B cell (primary cell): ENCODE measurements at regions of chr14 and their contacts with region 1.

Region 1: GRCh38 chr14:24114536-24115450 is at the starts of genes DCAF11 and NRL:
- DNase-seq: peak; percentile 100
- ATAC-seq: peak; percentile 81
- H3K4me3 ChIP-seq: peak within 1 kb of the TSS; percentile 88 to 99 (median 97)
- H3K4me3 Mint-ChIP-seq: peak within 1 kb of the TSS; percentile 93
- H3K27ac ChIP-seq: peak within 1 kb of the TSS; percentile 99 to 100
- H3K27ac Mint-ChIP-seq: peak within 1 kb of the TSS; percentile 100
- H3K4me1 ChIP-seq: peaks cover 17 to 25% of the 10 kb centered on the region in 2 donors
- H3K4me1 Mint-ChIP-seq: peaks cover 26% of the 10 kb centered on the region
- H3K27me3 ChIP-seq: no peaks in the 10 kb centered on the region
- H3K27me3 Mint-ChIP-seq: no peaks in the 10 kb centered on the region
- CTCF ChIP-seq: no peak
- total RNA-seq, gene DCAF11: 84.8 and 96.3 TPM in 2 replicates
- total RNA-seq, gene NRL: 8.1 and 8.8 TPM in 2 replicates

Region 2: GRCh38 chr14:23555882-23556699 is 558.7 kb before region 1 on chr14 and contains the start of gene THTPA:
- CTCF ChIA-PET with region 1: no interaction called
- POLR2A ChIA-PET with region 1: no interaction called
- intact Hi-C with region 1: loop called (anchors 10 kb)
- DNase-seq: peak; percentile 96
- ATAC-seq: peak; percentile 78
- H3K4me3 ChIP-seq: peak within 1 kb of the TSS; percentile 17 to 97 (median 81)
- H3K4me3 Mint-ChIP-seq: peak within 1 kb of the TSS; percentile 98
- H3K27ac ChIP-seq: peak within 1 kb of the TSS; percentile 69 to 84
- H3K27ac Mint-ChIP-seq: peak within 1 kb of the TSS; percentile 99
- H3K4me1 ChIP-seq: peaks cover 19 to 36% of the 10 kb centered on the region in 2 donors
- H3K4me1 Mint-ChIP-seq: peaks cover 45% of the 10 kb centered on the region
- H3K27me3 ChIP-seq: no peaks in the 10 kb centered on the region
- H3K27me3 Mint-ChIP-seq: no peaks in the 10 kb centered on the region
- CTCF ChIP-seq: no peak
- total RNA-seq, gene THTPA: 21.4 and 21.5 TPM in 2 replicates

Region 3: GRCh38 chr14:23694085-23694975 is 420.5 kb before region 1 on chr14:
- CTCF ChIA-PET with region 1: no interaction called
- POLR2A ChIA-PET with region 1: no interaction called
- intact Hi-C with region 1: no loop called
- DNase-seq: no peak
- ATAC-seq: no peak
- H3K4me3 ChIP-seq: no peak overlapping the region
- H3K4me3 Mint-ChIP-seq: no peak overlapping the region
- H3K27ac ChIP-seq: no peak overlapping the region
- H3K27ac Mint-ChIP-seq: no peak overlapping the region
- H3K4me1 ChIP-seq: peaks cover 5 to 9% of the 10 kb centered on the region in 2 donors
- H3K4me1 Mint-ChIP-seq: no peaks in the 10 kb centered on the region
- H3K27me3 ChIP-seq: peaks cover 0 to 40% (median 23%) of the 10 kb centered on the region in 4 experiments
- H3K27me3 Mint-ChIP-seq: peaks cover 44% of the 10 kb centered on the region
- CTCF ChIP-seq: no peak

Region 4: GRCh38 chr14:24086193-24086955 is 28.4 kb before region 1 on chr14:
- CTCF ChIA-PET with region 1: interaction called, 292 read pairs
- POLR2A ChIA-PET with region 1: interaction called, 15 read pairs
- intact Hi-C with region 1: loop called (anchors 1 kb)
- DNase-seq: no peak
- ATAC-seq: no peak
- H3K4me3 ChIP-seq: no peak overlapping the region
- H3K4me3 Mint-ChIP-seq: no peak overlapping the region
- H3K27ac ChIP-seq: no peak overlapping the region
- H3K27ac Mint-ChIP-seq: no peak overlapping the region
- H3K4me1 ChIP-seq: peaks cover 5 to 16% of the 10 kb centered on the region in 2 donors
- H3K4me1 Mint-ChIP-seq: peaks cover 17% of the 10 kb centered on the region
- H3K27me3 ChIP-seq: no peaks in the 10 kb centered on the region
- H3K27me3 Mint-ChIP-seq: no peaks in the 10 kb centered on the region
- CTCF ChIP-seq: no peak

Region 5: DNA sequence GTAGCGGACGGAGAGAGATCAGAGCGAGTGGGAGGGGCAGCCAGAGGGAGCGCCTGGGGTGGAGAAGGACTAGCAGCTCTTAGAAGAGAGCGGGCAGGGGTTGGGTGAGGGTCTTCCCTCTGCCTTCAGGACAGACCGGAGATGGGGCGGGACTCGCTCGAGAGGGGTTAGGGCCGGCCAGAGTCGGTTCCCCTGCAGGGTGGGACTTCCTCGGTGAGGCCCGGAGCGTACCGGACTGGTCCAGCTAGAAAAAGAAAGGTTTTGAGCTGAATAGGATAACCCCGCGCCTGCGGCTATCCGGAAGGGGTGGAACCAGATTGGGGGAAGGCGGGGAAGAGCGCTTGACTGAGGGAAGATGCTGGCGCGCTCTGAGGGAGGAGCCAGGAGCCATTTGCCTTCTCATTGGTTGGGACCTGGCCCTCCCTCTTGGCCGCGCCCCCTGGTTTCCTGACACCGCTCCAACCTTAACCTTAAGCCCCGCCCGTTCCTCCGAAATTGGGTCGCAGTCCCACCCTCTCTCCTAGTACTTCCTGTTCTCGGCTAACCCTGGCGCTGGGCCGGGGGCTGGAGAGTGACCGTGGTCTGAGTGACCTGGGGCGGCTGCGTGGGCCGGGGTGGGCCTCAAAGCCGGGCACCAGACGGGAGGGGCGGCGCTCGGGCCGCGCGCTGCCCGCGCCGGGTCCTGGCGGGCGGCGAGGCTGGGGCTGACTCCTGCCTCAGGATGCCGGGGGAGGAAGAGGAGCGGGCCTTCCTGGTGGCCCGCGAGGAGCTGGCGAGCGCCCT is 32.4 kb after region 1 on chr14 and contains the start of gene RNF31:
- CTCF ChIA-PET with region 1: interaction called, 29 read pairs
- POLR2A ChIA-PET with region 1: interaction called, 35 read pairs
- intact Hi-C with region 1: loop called (anchors 1 kb)
- DNase-seq: peak; percentile 98
- ATAC-seq: peak; percentile 84
- H3K4me3 ChIP-seq: peak within 1 kb of the TSS; percentile 83 to 95 (median 94)
- H3K4me3 Mint-ChIP-seq: peak within 1 kb of the TSS; percentile 95
- H3K27ac ChIP-seq: peak within 1 kb of the TSS; percentile 77 to 90
- H3K27ac Mint-ChIP-seq: peak within 1 kb of the TSS; percentile 95
- H3K4me1 ChIP-seq: peaks cover 21 to 35% of the 10 kb centered on the region in 2 donors
- H3K4me1 Mint-ChIP-seq: peaks cover 50% of the 10 kb centered on the region
- H3K27me3 ChIP-seq: no peaks in the 10 kb centered on the region
- H3K27me3 Mint-ChIP-seq: no peaks in the 10 kb centered on the region
- CTCF ChIP-seq: no peak
- total RNA-seq, gene RNF31: 103 and 114 TPM in 2 replicates

Region 6: DNA sequence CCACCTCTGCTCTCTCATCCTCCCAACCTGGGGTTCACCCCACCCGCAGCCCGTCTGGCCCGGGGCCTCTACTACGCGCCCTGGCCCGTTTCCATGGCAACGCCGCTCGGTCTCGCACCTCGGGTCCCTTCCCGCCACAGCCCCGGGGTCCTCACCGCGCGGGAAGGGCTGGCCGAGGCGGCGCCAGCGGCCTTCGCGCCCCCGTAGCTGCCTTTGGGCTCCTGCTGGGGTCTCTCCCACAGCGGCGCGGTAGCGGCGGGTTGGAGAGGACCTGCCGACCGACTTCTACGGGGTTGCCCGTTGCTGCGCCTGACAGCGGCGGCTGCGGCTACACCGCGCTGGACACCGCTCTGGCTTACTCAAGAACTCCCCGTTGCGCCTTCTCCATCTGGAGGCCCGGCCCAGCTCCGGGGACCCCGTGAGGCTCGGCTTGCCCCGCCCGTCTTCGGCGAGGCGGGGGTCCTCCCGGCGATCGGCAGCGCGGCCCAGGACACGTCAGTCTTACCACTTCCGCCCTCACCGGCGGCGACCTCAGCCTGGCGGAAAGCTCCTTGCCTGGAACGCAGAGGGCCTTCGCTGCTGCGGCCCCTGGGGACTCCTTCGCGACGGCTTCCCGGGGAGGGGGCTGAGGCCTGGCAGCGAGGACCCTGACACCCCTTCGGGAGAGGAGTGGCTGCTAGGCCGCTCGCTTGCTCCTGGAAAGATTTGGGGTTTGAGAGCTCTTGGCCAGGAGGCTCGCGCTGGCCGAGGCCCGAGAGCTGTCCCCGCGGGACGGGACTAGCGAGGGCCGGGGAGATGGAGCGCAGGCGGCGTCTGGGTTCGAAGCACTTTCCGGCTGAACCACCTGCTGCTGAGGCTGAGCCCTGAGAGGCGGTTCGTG is 80.6 kb after region 1 on chr14 and contains the start of gene TM9SF1:
- CTCF ChIA-PET with region 1: interaction called, 4 read pairs
- POLR2A ChIA-PET with region 1: interaction called, 15 read pairs
- intact Hi-C with region 1: no loop called
- DNase-seq: peak; percentile 96
- ATAC-seq: peak; percentile 90
- H3K4me3 ChIP-seq: peak within 1 kb of the TSS; percentile 82 to 99 (median 83)
- H3K4me3 Mint-ChIP-seq: peak within 1 kb of the TSS; percentile 89
- H3K27ac ChIP-seq: peak within 1 kb of the TSS; percentile 98 to 99
- H3K27ac Mint-ChIP-seq: peak within 1 kb of the TSS; percentile 99
- H3K4me1 ChIP-seq: peaks cover 25 to 26% of the 10 kb centered on the region in 2 donors
- H3K4me1 Mint-ChIP-seq: peaks cover 49% of the 10 kb centered on the region
- H3K27me3 ChIP-seq: no peaks in the 10 kb centered on the region
- H3K27me3 Mint-ChIP-seq: no peaks in the 10 kb centered on the region
- CTCF ChIP-seq: no peak
- total RNA-seq, gene TM9SF1: 24.5 and 33.9 TPM in 2 replicates

Region 7: DNA sequence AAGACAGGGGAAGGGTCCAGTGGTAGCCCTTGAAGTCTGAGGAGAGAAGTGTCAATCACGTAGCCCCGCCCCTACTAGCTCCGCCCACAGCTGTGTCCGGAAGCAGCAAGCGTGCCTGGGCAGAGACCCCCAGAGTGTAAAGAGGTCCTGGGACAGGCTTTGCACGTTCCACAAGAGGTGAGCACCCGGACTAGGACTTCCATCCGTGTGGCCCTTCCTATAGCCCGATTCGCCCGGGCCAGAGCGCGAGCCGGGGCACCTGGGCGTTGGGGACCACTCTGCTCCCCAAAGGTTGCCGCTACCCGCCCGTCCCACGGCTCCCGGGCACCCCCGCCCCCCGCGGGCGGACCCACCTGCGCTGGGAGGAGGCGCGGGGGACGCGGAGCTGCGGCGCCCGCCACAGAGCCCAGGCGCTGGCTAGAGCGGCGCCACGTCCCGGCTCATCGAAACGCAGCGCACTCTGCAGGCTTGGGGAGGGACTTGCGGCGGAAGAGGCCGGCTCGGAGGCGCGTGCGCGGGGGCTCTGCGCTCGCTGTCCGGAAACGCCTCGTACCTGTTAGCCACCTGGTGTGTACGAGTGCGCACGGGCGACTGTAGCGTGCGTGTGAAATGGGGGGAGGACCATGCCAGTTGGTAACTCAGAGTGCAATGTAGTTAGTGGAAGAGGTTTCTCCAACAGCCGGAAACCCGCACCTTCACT is 156.5 kb after region 1 on chr14 and contains the start of gene RABGGTA:
- CTCF ChIA-PET with region 1: interaction called, 4 read pairs
- POLR2A ChIA-PET with region 1: interaction called, 4 read pairs
- intact Hi-C with region 1: loop called (anchors 1 kb)
- DNase-seq: peak; percentile 98
- ATAC-seq: peak; percentile 87
- H3K4me3 ChIP-seq: peak within 1 kb of the TSS; percentile 45 to 96 (median 93)
- H3K4me3 Mint-ChIP-seq: peak within 1 kb of the TSS; percentile 94
- H3K27ac ChIP-seq: peak within 1 kb of the TSS; percentile 93 to 97
- H3K27ac Mint-ChIP-seq: peak within 1 kb of the TSS; percentile 94
- H3K4me1 ChIP-seq: peaks cover 32 to 39% of the 10 kb centered on the region in 2 donors
- H3K4me1 Mint-ChIP-seq: peaks cover 48% of the 10 kb centered on the region
- H3K27me3 ChIP-seq: no peaks in the 10 kb centered on the region
- H3K27me3 Mint-ChIP-seq: no peaks in the 10 kb centered on the region
- CTCF ChIP-seq: peak; percentile 75
- total RNA-seq, gene RABGGTA: 57.9 and 70.1 TPM in 2 replicates